A673 (cell line): ENCODE measurements at regions of chr2 and their contacts with region 1.

Region 1: DNA sequence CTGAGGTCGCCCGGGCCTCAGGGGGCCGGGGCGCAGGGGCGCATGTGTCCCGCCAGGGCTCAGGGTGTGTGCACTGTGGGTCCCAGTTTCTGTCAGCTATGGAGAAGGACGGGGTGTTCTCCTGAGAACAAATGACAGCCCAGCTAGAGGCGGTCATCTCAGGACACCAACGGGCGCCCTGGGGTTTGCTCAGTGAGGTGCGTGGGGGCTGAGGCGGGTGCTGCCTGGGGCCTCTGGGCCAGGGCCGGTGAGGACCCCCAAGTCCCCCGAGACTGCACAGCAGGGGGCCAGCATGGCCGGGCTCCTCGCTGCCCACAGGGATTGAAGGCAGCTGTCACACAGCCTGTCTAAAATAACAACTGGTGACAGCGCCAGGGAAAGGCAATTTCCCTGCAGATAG is 808.8 kb upstream of the SOX11 start:
- DNase-seq: no peak
- H3K4me3 ChIP-seq: no peak overlapping the region
- H3K27ac ChIP-seq: no peak overlapping the region
- H3K4me1 ChIP-seq: no peaks in the 10 kb centered on the region
- H3K27me3 ChIP-seq: no peaks in the 10 kb centered on the region
- CTCF ChIP-seq: no peak

Region 2: GRCh38 chr2:4930704-4931103 is 47.3 kb after region 1 on chr2:
- CTCF ChIA-PET with region 1: no interaction called
- POLR2A ChIA-PET with region 1: interaction called, 26 read pairs
- intact Hi-C with region 1: no loop called
- DNase-seq: no peak
- H3K4me3 ChIP-seq: no peak overlapping the region
- H3K27ac ChIP-seq: no peak overlapping the region
- H3K4me1 ChIP-seq: no peaks in the 10 kb centered on the region
- H3K27me3 ChIP-seq: no peaks in the 10 kb centered on the region
- CTCF ChIP-seq: no peak